Natural killer cell (primary cell): ENCODE measurements at regions of chr17 and their contacts with region 1.

Region 1: GRCh38 chr17:42405963-42406495 is 17.0 kb downstream of the CAVIN1 start:
- DNase-seq: peak; percentile 84 to 89
- ATAC-seq: peak; percentile 85 to 87 (median 85)
- H3K4me3 ChIP-seq: no peak overlapping the region
- H3K4me3 Mint-ChIP-seq: no peak overlapping the region
- H3K27ac ChIP-seq: no peak overlapping the region
- H3K27ac Mint-ChIP-seq: no peak overlapping the region
- H3K4me1 ChIP-seq: peaks cover 7% of the 10 kb centered on the region
- H3K4me1 Mint-ChIP-seq: peaks cover 6 to 9% of the 10 kb centered on the region in 2 donors
- H3K27me3 ChIP-seq: no peaks in the 10 kb centered on the region
- H3K27me3 Mint-ChIP-seq: peaks cover 7% of the 10 kb centered on the region in 2 donors
- CTCF ChIP-seq: peak; percentile 85

Region 2: DNA sequence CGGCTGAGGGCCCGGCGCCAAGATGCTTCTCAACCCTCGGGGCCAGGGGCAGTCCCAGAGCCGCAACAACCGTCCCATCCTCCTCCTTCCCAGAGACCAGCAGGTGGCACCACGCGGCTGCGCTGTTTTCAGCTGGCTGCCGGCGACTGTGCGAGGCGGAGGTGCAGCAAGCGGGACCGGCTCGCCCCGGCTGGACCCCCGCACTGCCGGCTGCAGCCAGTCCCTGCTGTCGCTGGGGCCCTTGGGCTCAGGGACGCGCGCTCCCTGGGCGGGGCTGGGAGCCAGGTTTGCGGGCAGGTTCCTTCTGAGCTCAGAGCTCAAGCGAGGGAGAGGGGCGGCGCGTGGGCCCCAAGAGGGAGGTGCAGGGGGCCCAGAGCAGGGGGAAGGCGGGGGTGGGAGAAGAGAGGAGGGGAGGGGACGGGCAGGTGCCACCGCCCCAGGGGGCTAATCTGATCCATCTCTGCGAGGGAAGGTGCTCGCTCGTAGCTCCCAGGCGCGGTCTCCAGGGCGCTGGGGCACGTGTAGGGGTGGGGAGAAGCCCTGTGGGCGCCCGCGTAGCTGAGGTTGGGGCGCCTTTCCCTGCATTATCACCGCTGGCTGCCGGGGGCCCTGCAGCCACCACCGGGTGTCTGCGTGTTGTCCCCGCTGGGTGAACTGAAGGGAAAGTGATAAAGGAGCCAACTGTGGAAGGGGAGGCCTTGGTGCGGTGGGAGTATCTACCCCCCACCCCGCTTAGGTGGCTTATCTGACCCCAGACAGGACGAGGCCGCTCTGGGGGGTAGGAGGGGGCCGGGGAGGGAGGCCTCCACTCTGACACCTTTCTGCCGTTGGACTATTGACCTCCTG is 93.5 kb before region 1 on chr17:
- intact Hi-C with region 1: loop called (anchors 1 kb)
- DNase-seq: peak; percentile 61 to 90
- ATAC-seq: peak; percentile 82
- H3K4me3 ChIP-seq: no peak overlapping the region
- H3K4me3 Mint-ChIP-seq: peak overlapping the region; percentile 35
- H3K27ac ChIP-seq: no peak overlapping the region
- H3K27ac Mint-ChIP-seq: peak overlapping the region; percentile 61 to 65
- H3K4me1 ChIP-seq: peaks cover 38% of the 10 kb centered on the region
- H3K4me1 Mint-ChIP-seq: peaks cover 7 to 32% of the 10 kb centered on the region in 2 donors
- H3K27me3 ChIP-seq: no peaks in the 10 kb centered on the region
- H3K27me3 Mint-ChIP-seq: no peaks in the 10 kb centered on the region
- CTCF ChIP-seq: peak; percentile 47

Region 3: DNA sequence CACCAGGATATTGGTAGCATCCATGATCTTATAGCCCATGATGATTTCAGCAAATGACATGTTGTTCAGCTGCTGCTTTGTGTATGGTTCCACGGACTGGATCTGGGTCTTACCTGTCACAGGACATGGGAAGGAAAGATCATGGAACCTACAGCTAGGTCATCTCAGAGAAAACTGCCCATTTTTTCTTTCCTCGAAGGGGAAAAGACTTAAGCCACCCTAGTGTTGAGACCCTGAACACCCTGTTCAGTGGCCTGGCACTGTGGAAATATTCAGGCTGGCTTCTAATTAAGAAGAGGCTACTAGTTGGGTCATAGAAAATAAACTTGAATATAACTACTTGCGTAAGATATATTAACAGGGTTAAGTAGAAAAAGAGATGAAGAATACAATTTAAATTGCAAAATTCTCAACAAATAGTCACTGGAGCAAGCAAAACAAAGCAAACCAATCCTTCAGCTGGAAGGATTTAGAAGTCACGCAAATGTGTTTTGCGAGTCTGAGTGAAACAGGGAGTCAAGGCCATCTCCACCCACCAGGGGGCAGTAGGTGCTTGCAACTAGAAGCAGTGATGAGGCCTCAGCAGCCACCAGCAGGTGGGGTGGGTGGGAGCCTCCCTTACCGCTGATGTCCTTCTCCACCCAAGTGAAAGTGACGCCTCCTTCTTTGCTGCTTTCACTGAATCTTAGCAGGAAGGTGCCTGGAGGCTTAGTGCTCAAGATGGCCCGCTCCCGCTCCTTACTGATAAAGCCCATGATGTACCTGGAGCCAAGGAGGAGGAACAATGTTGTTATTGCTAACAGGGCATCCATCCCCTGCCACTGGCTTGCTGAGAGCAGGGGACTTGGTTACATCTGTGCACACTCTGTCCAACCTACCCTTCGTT is 83.4 kb before region 1 on chr17:
- intact Hi-C with region 1: loop called (anchors 1 kb)
- DNase-seq: peak; percentile 91 to 98
- ATAC-seq: peak; percentile 99
- H3K4me3 ChIP-seq: no peak overlapping the region
- H3K4me3 Mint-ChIP-seq: no peak overlapping the region
- H3K27ac ChIP-seq: no peak overlapping the region
- H3K27ac Mint-ChIP-seq: peak overlapping the region in 1 of 2 donors; percentile 31
- H3K4me1 ChIP-seq: peaks cover 14% of the 10 kb centered on the region
- H3K4me1 Mint-ChIP-seq: peaks cover 14 to 20% of the 10 kb centered on the region in 2 donors
- H3K27me3 ChIP-seq: no peaks in the 10 kb centered on the region
- H3K27me3 Mint-ChIP-seq: no peaks in the 10 kb centered on the region
- CTCF ChIP-seq: peak; percentile 100

Region 4: GRCh38 chr17:42337442-42337841 is 68.6 kb before region 1 on chr17:
- intact Hi-C with region 1: no loop called
- DNase-seq: peak in 1 of 2 donors; percentile 87
- ATAC-seq: peak in 2 of 3 donors; percentile 38 to 53
- H3K4me3 ChIP-seq: no peak overlapping the region
- H3K4me3 Mint-ChIP-seq: no peak overlapping the region
- H3K27ac ChIP-seq: no peak overlapping the region
- H3K27ac Mint-ChIP-seq: no peak overlapping the region
- H3K4me1 ChIP-seq: peaks cover 24% of the 10 kb centered on the region
- H3K4me1 Mint-ChIP-seq: peaks cover 12 to 15% of the 10 kb centered on the region in 2 donors
- H3K27me3 ChIP-seq: no peaks in the 10 kb centered on the region
- H3K27me3 Mint-ChIP-seq: no peaks in the 10 kb centered on the region
- CTCF ChIP-seq: no peak

Region 5: GRCh38 chr17:42428141-42428944 is 22.3 kb after region 1 on chr17:
- intact Hi-C with region 1: no loop called
- DNase-seq: peak in 1 of 2 donors; percentile 77
- ATAC-seq: peak; percentile 66 to 80 (median 76)
- H3K4me3 ChIP-seq: no peak overlapping the region
- H3K4me3 Mint-ChIP-seq: no peak overlapping the region
- H3K27ac ChIP-seq: no peak overlapping the region
- H3K27ac Mint-ChIP-seq: no peak overlapping the region
- H3K4me1 ChIP-seq: peaks cover under 1% of the 10 kb centered on the region
- H3K4me1 Mint-ChIP-seq: peaks cover 0 to 4% of the 10 kb centered on the region in 2 donors
- H3K27me3 ChIP-seq: peaks cover 13% of the 10 kb centered on the region
- H3K27me3 Mint-ChIP-seq: peaks cover 21 to 27% of the 10 kb centered on the region in 2 donors
- CTCF ChIP-seq: peak; percentile 51